ENCODE measurements at regions of chr20 and their contacts with region 1.

Region 1: GRCh38 chr20:47857566-47858471 is 72.5 kb upstream of the SULF2 start:
- DNase-seq: peak in 1 of 2 donors; percentile 83
- H3K4me3 ChIP-seq: peak overlapping the region; percentile 11 to 41
- H3K27ac ChIP-seq: peak overlapping the region; percentile 70 to 78
- H3K4me1 ChIP-seq: peaks cover 4 to 8% of the 10 kb centered on the region in 2 donors
- H3K27me3 ChIP-seq: no peaks in the 10 kb centered on the region
- CTCF ChIP-seq: peak in 1 of 3 experiments; percentile 17

Region 2: GRCh38 chr20:47914792-47915191 is 57.0 kb after region 1 on chr20:
- intact Hi-C with region 1: no loop called
- DNase-seq: no peak
- H3K4me3 ChIP-seq: no peak overlapping the region
- H3K27ac ChIP-seq: no peak overlapping the region
- H3K4me1 ChIP-seq: no peaks in the 10 kb centered on the region
- H3K27me3 ChIP-seq: no peaks in the 10 kb centered on the region
- CTCF ChIP-seq: no peak

Region 3: DNA sequence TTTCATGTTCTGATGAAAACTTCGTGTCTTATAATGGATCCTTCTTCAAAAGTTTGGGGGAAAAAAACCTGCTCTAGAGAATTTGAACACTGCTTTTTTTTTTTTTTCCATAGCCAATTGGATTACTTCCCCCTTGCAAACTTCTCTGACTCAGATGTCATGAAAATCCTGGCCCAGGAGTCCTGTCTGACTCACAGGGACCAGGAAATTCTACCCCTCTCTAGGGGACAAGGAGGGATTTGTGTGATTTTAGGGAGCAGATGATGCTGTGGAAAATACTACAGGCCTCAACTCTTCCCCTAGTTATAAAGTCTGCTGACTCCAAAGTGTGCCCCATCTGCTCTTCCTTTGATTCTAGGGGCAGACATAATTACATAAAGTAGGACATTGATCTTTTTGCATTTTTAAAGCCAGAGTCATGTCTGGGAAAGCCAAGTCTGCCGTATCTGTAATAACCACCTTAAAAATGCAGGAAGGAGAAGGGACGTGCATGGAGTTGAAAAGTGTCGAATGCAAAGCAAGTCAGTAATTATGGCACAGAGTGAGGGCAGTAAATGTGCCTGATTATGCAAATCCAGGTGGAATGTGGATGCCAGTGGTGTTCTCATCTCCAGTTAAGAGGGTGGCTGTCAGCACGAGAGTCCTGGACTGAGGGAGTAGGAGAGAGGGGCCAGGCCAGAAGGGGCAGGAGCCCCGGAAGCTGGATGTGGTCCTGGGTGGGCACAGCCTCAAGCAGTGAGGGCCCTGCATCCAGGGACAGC is 71.7 kb after region 1 on chr20:
- intact Hi-C with region 1: loop called (anchors 5 kb)
- DNase-seq: peak in 1 of 2 donors; percentile 76
- H3K4me3 ChIP-seq: no peak overlapping the region
- H3K27ac ChIP-seq: no peak overlapping the region
- H3K4me1 ChIP-seq: no peaks in the 10 kb centered on the region
- H3K27me3 ChIP-seq: no peaks in the 10 kb centered on the region
- CTCF ChIP-seq: no peak

Measured in ascending aorta (tissue), 2 donors.